ENCODE measurements at regions of chr6 and their contacts with region 1.

Region 1: DNA sequence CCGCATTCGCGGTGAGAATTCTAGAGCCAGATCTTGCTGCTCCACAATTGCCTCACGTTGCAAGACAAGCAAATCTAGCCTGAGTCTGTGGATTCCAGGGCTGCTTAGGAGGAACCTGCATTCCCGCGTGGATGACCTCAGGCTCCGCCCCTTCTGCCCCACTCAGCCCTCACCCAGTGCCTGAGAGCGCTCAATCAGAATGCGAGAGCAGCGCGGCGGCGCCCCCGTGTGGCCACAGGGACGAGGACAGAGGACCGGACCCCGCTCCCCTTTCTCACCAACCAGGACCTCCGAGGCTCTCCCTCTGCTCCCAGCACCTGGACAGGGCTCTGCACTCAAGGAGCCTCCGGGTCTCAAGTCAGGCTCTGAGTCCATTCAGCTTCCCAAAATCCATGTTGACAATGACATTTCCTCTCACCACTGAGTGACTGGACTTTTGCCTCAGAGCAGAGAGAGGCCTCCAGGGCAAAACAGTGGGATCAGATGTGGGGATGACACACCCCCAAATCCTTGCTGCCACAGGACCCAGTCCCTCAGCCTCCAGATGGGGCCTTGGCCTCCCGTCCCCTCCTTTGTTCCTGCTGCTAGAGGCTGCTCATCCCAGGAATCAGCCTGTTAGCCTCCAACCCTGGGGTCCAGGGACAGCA is 52.0 kb downstream of the RPP21 start:
- DNase-seq: peak; percentile 83
- H3K4me3 Mint-ChIP-seq: no peak overlapping the region
- H3K27ac Mint-ChIP-seq: no peak overlapping the region
- H3K4me1 Mint-ChIP-seq: peaks cover 2% of the 10 kb centered on the region
- H3K27me3 Mint-ChIP-seq: peaks cover 45% of the 10 kb centered on the region

Region 2: DNA sequence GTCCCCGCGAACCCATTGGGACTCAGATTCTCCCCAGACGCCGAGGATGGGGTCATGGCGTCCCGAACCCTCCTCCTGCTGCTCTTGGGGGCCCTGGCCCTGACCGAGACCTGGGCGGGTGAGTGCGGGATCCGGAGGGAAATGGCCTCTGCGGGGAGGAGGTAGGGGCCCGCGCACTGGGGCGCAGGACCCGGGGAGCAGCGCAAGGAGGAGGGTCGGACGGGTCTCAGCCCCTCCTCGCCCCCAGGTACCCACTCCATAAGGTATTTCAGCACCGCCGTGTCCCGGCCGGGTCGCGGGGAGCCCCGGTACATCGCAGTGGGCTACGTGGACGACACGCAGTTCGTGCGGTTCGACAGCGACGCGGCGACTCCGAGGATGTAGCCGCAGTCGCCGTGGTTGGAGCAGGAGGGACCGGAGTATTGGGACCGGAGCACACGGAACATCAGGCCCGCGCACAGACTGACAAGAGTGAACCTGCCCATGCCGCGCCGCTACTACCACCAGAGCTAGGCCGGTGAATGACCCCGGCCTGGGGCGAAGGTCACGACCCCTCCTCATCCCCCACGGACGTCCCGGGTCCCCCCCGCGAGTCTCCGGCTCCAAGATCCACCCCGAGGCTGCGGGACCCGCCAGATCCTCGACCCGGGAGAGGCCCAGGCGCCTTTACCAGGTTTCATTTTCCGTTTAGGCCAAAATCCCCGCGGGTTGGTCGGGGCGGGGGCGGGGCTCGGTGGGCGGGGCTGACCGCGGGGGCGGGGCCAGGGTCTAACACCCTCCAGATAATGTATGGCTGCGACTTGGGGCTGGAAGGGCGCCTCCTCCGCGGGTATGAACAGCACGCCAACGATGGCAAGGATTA is 470.3 kb before region 1 on chr6:
- CTCF ChIA-PET with region 1: no interaction called
- POLR2A ChIA-PET with region 1: no interaction called
- DNase-seq: peak; percentile 91
- H3K4me3 Mint-ChIP-seq: peak overlapping the region; percentile 84
- H3K27ac Mint-ChIP-seq: peak overlapping the region; percentile 85
- H3K4me1 Mint-ChIP-seq: peaks cover 36% of the 10 kb centered on the region
- H3K27me3 Mint-ChIP-seq: no peaks in the 10 kb centered on the region

Region 3: GRCh38 chr6:30219244-30219643 is 177.7 kb before region 1 on chr6:
- CTCF ChIA-PET with region 1: interaction called, 11 read pairs
- POLR2A ChIA-PET with region 1: interaction called, 3 read pairs
- DNase-seq: peak; percentile 53
- H3K4me3 Mint-ChIP-seq: no peak overlapping the region
- H3K27ac Mint-ChIP-seq: no peak overlapping the region
- H3K4me1 Mint-ChIP-seq: peaks cover 16% of the 10 kb centered on the region
- H3K27me3 Mint-ChIP-seq: no peaks in the 10 kb centered on the region

Region 4: DNA sequence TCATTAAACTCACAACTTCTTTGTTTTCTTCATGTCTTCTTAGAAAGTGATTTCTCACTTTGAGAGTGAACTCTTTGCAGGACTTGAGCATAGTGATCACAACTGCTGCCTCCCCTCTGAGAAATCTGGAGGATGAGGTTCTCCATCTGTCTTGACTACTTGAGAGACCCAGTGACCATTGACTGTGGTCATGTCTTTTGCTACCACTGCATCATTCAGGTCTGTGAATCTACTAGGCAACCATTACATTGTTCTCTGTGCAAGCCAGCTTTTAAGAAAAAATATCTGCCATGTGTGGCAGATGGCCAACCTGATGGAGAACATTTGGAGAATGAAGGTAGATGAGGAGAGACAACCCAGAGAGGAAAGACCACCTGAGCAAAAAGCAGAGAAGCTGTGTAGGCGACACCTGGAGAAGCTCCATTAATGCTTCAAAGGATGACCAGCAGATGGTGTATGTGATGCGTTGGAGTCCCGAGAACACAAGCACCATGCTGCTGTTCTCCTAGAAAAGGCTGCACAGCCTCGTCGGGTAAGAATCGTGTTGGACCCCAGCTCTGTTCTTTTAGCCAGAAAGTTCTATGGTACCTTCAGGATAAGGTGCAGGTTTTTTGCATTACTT is 158.7 kb before region 1 on chr6:
- CTCF ChIA-PET with region 1: interaction called, 11 read pairs
- POLR2A ChIA-PET with region 1: no interaction called
- DNase-seq: no peak
- H3K4me3 Mint-ChIP-seq: no peak overlapping the region
- H3K27ac Mint-ChIP-seq: no peak overlapping the region
- H3K4me1 Mint-ChIP-seq: no peaks in the 10 kb centered on the region
- H3K27me3 Mint-ChIP-seq: peaks cover 36% of the 10 kb centered on the region

Region 5: GRCh38 chr6:31152776-31153175 is 755.8 kb after region 1 on chr6:
- CTCF ChIA-PET with region 1: no interaction called
- POLR2A ChIA-PET with region 1: no interaction called
- DNase-seq: no peak
- H3K4me3 Mint-ChIP-seq: no peak overlapping the region
- H3K27ac Mint-ChIP-seq: no peak overlapping the region
- H3K4me1 Mint-ChIP-seq: peaks cover 22% of the 10 kb centered on the region
- H3K27me3 Mint-ChIP-seq: no peaks in the 10 kb centered on the region